CD8-positive, alpha-beta T cell (primary cell): ENCODE measurements at regions of chrX and their contacts with region 1.

Region 1: GRCh38 chrX:48917139-48918001 is 1.5 kb downstream of the PIM2 start:
- DNase-seq: peak; percentile 77 to 93 (median 88)
- ATAC-seq: peak; percentile 37
- H3K4me3 ChIP-seq: peak overlapping the region; percentile 92 to 95
- H3K4me3 Mint-ChIP-seq: peak overlapping the region; percentile 97
- H3K27ac ChIP-seq: peak overlapping the region; percentile 75 to 100
- H3K27ac Mint-ChIP-seq: peak overlapping the region; percentile 97
- H3K4me1 ChIP-seq: peaks cover 58% of the 10 kb centered on the region
- H3K4me1 Mint-ChIP-seq: peaks cover 56% of the 10 kb centered on the region
- H3K27me3 ChIP-seq: no peaks in the 10 kb centered on the region
- H3K27me3 Mint-ChIP-seq: no peaks in the 10 kb centered on the region
- CTCF ChIP-seq: peak; percentile 77

Region 2: GRCh38 chrX:47650164-47651042 is 1267.0 kb before region 1 on chrX and contains the start of gene ELK1:
- CTCF ChIA-PET with region 1: no interaction called
- POLR2A ChIA-PET with region 1: no interaction called
- intact Hi-C with region 1: loop called in 1 of 2 experiments (anchors 10 kb)
- DNase-seq: peak; percentile 75 to 96 (median 87)
- ATAC-seq: peak; percentile 89
- H3K4me3 ChIP-seq: peak within 1 kb of the TSS; percentile 63 to 69
- H3K4me3 Mint-ChIP-seq: peak within 1 kb of the TSS; percentile 91
- H3K27ac ChIP-seq: peak within 1 kb of the TSS; percentile 61 to 70
- H3K27ac Mint-ChIP-seq: peak within 1 kb of the TSS; percentile 93
- H3K4me1 ChIP-seq: peaks cover 25% of the 10 kb centered on the region
- H3K4me1 Mint-ChIP-seq: peaks cover 44% of the 10 kb centered on the region
- H3K27me3 ChIP-seq: no peaks in the 10 kb centered on the region
- H3K27me3 Mint-ChIP-seq: no peaks in the 10 kb centered on the region
- CTCF ChIP-seq: no peak
- total RNA-seq, gene ELK1: 33.6 to 41.2 TPM

Region 3: DNA sequence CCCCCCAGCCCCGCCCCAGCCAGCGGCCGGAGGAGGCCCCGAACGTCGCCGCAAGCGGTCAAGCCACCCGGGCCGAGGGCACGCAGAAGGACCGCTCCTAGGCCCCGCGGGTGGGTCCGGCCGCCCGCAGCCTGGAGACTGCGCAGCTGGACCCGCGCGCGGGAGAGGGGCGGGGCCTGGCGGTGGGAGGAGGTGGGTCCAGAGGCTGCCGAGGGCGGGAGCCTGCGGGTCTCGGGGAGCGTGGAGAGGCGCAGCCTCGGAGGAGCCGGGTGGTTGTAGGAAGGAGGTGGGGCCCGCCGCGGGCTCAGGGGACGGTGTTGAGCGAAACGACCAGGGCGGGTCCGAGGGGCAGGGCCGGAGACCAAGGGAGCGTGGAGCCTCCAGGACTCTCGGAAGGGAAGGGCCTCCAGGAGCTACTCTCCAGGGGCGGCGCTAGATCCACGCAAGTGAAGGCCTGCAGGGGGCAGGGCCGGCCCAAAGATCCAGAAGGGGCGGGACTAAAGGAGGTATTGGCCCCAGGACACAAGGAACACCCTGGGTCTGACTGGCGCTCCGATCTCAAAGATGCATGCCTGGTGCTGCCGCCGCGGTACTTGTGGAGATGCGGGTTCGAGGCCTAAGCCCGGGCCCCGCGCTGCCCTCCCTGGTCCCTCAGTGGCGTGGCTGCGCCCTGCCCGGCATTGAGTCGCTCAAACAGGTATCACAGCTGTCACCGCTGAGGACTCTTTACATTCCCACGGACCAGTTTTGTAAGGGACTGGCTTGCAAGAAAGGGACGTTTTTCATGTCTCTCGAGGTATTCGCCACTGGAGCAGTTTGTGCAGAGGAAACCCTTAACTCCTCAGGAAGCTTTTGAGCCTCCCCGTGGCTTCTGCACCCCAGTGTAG is 25.7 kb before region 1 on chrX:
- CTCF ChIA-PET with region 1: interaction called, 5 read pairs
- POLR2A ChIA-PET with region 1: no interaction called
- intact Hi-C with region 1: loop called in 1 of 2 experiments (anchors 1 kb)
- DNase-seq: peak; percentile 46 to 88 (median 75)
- ATAC-seq: peak; percentile 87
- H3K4me3 ChIP-seq: peak overlapping the region; percentile 56 to 59
- H3K4me3 Mint-ChIP-seq: peak overlapping the region; percentile 89
- H3K27ac ChIP-seq: peak overlapping the region; percentile 31 to 40
- H3K27ac Mint-ChIP-seq: peak overlapping the region; percentile 27
- H3K4me1 ChIP-seq: peaks cover 14% of the 10 kb centered on the region
- H3K4me1 Mint-ChIP-seq: peaks cover 29% of the 10 kb centered on the region
- H3K27me3 ChIP-seq: no peaks in the 10 kb centered on the region
- H3K27me3 Mint-ChIP-seq: no peaks in the 10 kb centered on the region
- CTCF ChIP-seq: peak; percentile 51

Region 4: DNA sequence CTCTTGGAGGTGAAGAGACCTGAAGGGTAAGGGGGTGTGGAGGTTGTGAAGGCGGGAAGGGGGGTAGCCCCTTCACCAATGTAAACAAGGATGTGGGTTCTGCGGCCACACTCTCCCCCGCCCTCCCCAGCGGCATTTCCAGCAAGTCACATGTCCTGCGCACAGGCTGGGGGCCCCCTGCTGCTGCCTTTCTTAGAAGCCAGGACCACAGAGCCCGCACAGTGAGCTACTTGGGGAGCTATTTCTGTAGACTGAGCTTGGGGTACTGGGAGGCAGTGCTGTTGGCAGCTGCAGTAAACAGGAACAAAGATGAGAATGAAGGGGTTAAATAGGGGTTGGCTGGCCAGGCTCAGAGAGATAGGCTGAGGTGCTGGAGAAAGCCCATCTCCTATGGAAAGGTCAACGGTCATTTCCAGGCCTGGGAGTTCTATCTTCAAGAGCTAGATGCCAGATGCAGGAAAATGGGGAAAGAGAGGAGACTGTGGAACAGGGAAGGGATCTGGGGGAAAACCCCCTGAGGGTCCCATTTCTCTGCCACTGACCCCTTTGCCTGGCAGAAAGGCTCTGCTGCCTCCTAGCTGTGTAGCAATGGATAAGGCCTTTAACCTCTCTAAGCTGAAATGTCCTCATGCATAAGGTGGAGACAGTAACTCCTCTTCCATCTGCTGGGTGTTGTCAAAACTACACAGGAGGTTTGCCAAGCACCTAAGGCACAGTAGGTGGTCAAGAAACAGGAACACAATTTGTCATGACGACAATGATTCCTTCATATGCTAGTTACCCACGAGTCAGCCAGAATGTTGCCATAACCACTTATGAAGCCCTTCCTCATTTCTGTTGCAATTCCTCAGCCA is 19.9 kb after region 1 on chrX:
- CTCF ChIA-PET with region 1: interaction called, 7 read pairs
- POLR2A ChIA-PET with region 1: interaction called, 64 read pairs
- intact Hi-C with region 1: loop called (anchors 1 kb)
- DNase-seq: peak; percentile 79 to 95 (median 89)
- ATAC-seq: peak; percentile 67
- H3K4me3 ChIP-seq: peak overlapping the region; percentile 33 to 45
- H3K4me3 Mint-ChIP-seq: peak overlapping the region; percentile 83
- H3K27ac ChIP-seq: peak overlapping the region; percentile 82 to 89
- H3K27ac Mint-ChIP-seq: peak overlapping the region; percentile 99
- H3K4me1 ChIP-seq: peaks cover 81% of the 10 kb centered on the region
- H3K4me1 Mint-ChIP-seq: peaks cover 76% of the 10 kb centered on the region
- H3K27me3 ChIP-seq: no peaks in the 10 kb centered on the region
- H3K27me3 Mint-ChIP-seq: no peaks in the 10 kb centered on the region
- CTCF ChIP-seq: no peak

Region 5: GRCh38 chrX:49043220-49043986 is 126.0 kb after region 1 on chrX and contains the start of gene TFE3:
- CTCF ChIA-PET with region 1: no interaction called
- POLR2A ChIA-PET with region 1: no interaction called
- intact Hi-C with region 1: loop called in 1 of 2 experiments (anchors 1 kb)
- DNase-seq: peak; percentile 88 to 98 (median 93)
- ATAC-seq: peak; percentile 89
- H3K4me3 ChIP-seq: peak within 1 kb of the TSS; percentile 50 to 56
- H3K4me3 Mint-ChIP-seq: peak within 1 kb of the TSS; percentile 84
- H3K27ac ChIP-seq: peak within 1 kb of the TSS; percentile 73 to 92
- H3K27ac Mint-ChIP-seq: peak within 1 kb of the TSS; percentile 93
- H3K4me1 ChIP-seq: peaks cover 21% of the 10 kb centered on the region
- H3K4me1 Mint-ChIP-seq: peaks cover 35% of the 10 kb centered on the region
- H3K27me3 ChIP-seq: no peaks in the 10 kb centered on the region
- H3K27me3 Mint-ChIP-seq: no peaks in the 10 kb centered on the region
- CTCF ChIP-seq: no peak
- total RNA-seq, gene TFE3: 35.7 to 39.7 TPM